Activated B cell treated with CpG ODN at 0.5 μM for 24 hours (primary cell): ENCODE measurements at regions of chr7 and their contacts with region 1.

Region 1: DNA sequence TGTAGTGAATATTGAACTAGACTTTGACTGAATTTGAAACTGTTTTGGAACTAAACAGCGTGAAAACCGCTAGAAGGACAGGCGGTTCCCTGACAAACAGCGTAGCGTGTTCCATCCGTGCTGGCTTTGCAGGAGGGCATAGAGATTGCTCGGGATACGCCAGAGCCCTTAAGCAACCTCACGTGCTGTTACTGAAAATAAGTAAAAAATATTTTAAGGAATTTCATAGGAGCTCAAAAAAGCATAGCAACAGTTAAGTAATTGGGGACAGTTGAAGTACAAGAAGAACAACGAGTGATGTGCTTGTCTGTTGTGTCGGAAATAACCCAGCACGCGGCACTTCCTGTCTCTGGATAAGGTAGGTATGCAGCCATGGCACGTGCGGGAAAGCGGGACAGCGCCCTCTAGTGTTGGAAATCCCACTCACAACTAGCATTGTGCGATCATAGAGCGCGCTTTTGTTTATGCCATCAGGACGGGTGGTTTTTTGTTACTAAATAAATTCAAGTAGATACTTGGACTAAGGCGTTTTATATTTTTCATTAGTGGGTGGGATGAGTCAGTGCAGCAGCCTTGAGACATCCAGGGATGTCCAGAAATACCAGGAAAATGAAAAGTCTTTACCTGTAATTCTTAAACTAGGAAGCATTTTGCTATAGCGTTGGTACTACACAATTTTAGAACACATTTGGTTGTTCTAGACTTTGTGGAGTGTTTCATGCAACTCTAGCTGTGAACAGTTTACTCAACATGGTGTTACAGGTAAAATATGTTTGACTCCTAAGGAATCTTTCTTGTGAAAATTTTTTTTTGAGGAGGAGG is 50.4 kb downstream of the DNAJB6 start:
- DNase-seq: peak; percentile 52
- ATAC-seq: peak; percentile 95
- H3K4me3 Mint-ChIP-seq: no peak overlapping the region
- H3K27ac Mint-ChIP-seq: peak overlapping the region; percentile 19
- H3K4me1 Mint-ChIP-seq: peaks cover 16% of the 10 kb centered on the region
- H3K27me3 Mint-ChIP-seq: no peaks in the 10 kb centered on the region
- CTCF ChIP-seq: peak; percentile 68

Region 2: GRCh38 chr7:156949541-156950380 is 437.4 kb before region 1 on chr7 and contains the start of gene NOM1:
- CTCF ChIA-PET with region 1: no interaction called
- POLR2A ChIA-PET with region 1: interaction called, 3 read pairs
- intact Hi-C with region 1: loop called (anchors 1 kb)
- DNase-seq: peak; percentile 95
- ATAC-seq: peak; percentile 94
- H3K4me3 Mint-ChIP-seq: peak within 1 kb of the TSS; percentile 93
- H3K27ac Mint-ChIP-seq: peak within 1 kb of the TSS; percentile 78
- H3K4me1 Mint-ChIP-seq: peaks cover 24% of the 10 kb centered on the region
- H3K27me3 Mint-ChIP-seq: peaks cover 8% of the 10 kb centered on the region
- CTCF ChIP-seq: no peak
- total RNA-seq, gene NOM1: 34.7 and 39.1 TPM in 2 replicates

Region 3: GRCh38 chr7:156969972-156970420 is 417.2 kb before region 1 on chr7:
- CTCF ChIA-PET with region 1: interaction called, 4 read pairs
- POLR2A ChIA-PET with region 1: no interaction called
- intact Hi-C with region 1: loop called (anchors 10 kb)
- DNase-seq: no peak
- ATAC-seq: no peak
- H3K4me3 Mint-ChIP-seq: no peak overlapping the region
- H3K27ac Mint-ChIP-seq: no peak overlapping the region
- H3K4me1 Mint-ChIP-seq: no peaks in the 10 kb centered on the region
- H3K27me3 Mint-ChIP-seq: no peaks in the 10 kb centered on the region
- CTCF ChIP-seq: no peak